HEK293T (cell line): ENCODE measurements at regions of chr14 and their contacts with region 1.

Region 1: GRCh38 chr14:73491256-73492042 is 716 bp downstream of the RIOX1 start:
- DNase-seq: no peak

Region 2: GRCh38 chr14:73428353-73428824 is 63.1 kb before region 1 on chr14:
- CTCF ChIA-PET with region 1: no interaction called
- POLR2A ChIA-PET with region 1: no interaction called
- DNase-seq: no peak

Region 3: DNA sequence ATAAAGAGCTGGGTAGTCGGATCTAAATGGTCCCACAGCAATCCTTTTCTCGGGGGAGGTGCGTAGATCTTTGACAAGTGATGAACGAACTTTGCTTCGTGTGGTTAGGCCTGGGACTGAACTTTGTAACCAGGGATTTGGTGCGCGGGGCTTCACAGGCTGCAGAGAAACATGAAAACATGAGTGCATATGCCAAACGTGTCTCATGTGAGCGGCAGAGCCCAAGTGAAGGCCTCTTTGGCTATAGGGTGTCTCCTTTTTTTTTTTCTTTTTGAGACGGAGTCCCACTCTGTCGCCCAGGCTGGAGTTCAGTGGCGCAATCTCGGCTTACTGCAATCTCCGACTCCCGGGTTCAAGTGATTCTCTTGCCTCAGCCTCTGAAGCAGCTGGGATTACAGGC is 12.8 kb before region 1 on chr14:
- CTCF ChIA-PET with region 1: no interaction called
- POLR2A ChIA-PET with region 1: no interaction called
- DNase-seq: no peak

Region 4: DNA sequence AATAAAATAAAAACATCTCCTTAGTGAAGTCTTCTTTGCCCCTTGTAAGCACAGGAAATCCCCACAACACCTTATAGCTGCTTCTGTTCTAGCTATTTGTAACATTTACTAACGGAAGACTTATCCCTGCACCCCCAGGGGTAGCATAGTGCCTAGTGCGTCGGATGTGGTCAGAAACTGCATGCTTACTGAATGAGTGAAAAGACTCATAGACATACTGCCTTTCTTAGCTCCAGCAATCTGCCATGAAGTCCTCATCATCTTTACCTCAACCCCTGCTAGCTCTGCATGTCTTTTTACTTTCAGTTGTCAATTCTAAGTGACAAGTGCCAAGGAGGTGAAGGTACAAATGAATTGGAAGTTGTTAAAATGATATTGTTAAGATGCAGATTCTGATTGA is 12.2 kb after region 1 on chr14:
- CTCF ChIA-PET with region 1: no interaction called
- POLR2A ChIA-PET with region 1: interaction called, 10 read pairs
- DNase-seq: no peak